Endothelial cell of umbilical vein (primary cell): ENCODE measurements at regions of chr19 and their contacts with region 1.

Region 1: GRCh38 chr19:46661020-46661731 is at the start of gene DACT3:
- DNase-seq: peak; percentile 100
- H3K4me3 ChIP-seq: peak within 1 kb of the TSS; percentile 29 to 57 (median 33)
- H3K27ac ChIP-seq: peak within 1 kb of the TSS; percentile 34
- H3K4me1 ChIP-seq: peaks cover 14% of the 10 kb centered on the region
- H3K27me3 ChIP-seq: peaks cover 13 to 22% of the 10 kb centered on the region in 2 experiments
- CTCF ChIP-seq: no peak
- POLR2A ChIP-seq: no peak
- total RNA-seq, gene DACT3: 0.22 and 0.65 TPM in 2 replicates

Region 2: DNA sequence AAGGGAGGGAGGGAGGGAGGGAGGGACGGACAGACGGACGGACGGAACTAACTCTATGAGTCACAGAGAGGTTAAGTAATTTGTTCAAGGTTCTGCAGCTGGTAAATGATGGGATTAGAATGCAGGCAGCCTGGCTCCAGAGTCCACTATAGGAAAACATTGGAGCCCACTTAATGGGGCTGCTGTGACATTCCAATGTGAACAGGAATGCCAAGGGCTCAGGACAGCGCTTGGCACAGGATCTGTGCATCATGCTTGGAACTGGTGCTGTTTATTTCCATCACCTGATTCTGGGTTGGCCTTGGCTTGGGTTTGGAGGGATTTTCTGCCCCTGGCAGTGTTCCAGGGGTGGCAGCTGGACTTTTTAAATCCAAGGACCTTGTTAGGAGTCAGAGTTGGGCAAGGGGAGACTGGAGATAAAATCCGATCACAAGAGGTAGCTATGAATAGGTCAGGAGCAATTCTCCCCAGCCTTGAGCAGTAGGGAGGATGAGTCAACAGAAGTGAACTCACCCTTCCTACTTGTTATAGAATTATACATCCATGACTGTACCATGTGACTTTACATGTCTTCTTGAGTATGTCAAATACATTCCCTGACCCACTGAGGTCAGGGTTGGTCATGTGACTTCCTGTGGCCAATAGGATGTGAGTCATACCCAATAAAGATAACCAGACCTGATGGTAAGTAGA is 372.1 kb before region 1 on chr19:
- CTCF ChIA-PET with region 1: no interaction called
- POLR2A ChIA-PET with region 1: no interaction called
- dilution Hi-C with region 1: no loop called
- intact Hi-C with region 1: no loop called
- DNase-seq: peak; percentile 95
- H3K4me3 ChIP-seq: no peak overlapping the region
- H3K27ac ChIP-seq: peak overlapping the region; percentile 95
- H3K4me1 ChIP-seq: peaks cover 16% of the 10 kb centered on the region
- H3K27me3 ChIP-seq: no peaks in the 10 kb centered on the region
- CTCF ChIP-seq: no peak
- POLR2A ChIP-seq: no peak

Region 3: GRCh38 chr19:46529622-46530462 is 131.3 kb before region 1 on chr19:
- CTCF ChIA-PET with region 1: interaction called, 65 read pairs
- POLR2A ChIA-PET with region 1: no interaction called
- dilution Hi-C with region 1: no loop called
- intact Hi-C with region 1: loop called (anchors 1 kb)
- DNase-seq: peak; percentile 55
- H3K4me3 ChIP-seq: no peak overlapping the region
- H3K27ac ChIP-seq: no peak overlapping the region
- H3K4me1 ChIP-seq: no peaks in the 10 kb centered on the region
- H3K27me3 ChIP-seq: peaks cover 0 to 1% of the 10 kb centered on the region in 2 experiments
- CTCF ChIP-seq: peak; percentile 86 to 94
- POLR2A ChIP-seq: no peak

Region 4: GRCh38 chr19:46564701-46565100 is 96.5 kb before region 1 on chr19:
- CTCF ChIA-PET with region 1: no interaction called
- POLR2A ChIA-PET with region 1: no interaction called
- dilution Hi-C with region 1: no loop called
- intact Hi-C with region 1: no loop called
- DNase-seq: no peak
- H3K4me3 ChIP-seq: no peak overlapping the region
- H3K27ac ChIP-seq: no peak overlapping the region
- H3K4me1 ChIP-seq: no peaks in the 10 kb centered on the region
- H3K27me3 ChIP-seq: peaks cover 0 to 3% of the 10 kb centered on the region in 2 experiments
- CTCF ChIP-seq: no peak
- POLR2A ChIP-seq: no peak

Region 5: GRCh38 chr19:46600384-46601317 is 60.5 kb before region 1 on chr19:
- CTCF ChIA-PET with region 1: interaction called, 22 read pairs
- POLR2A ChIA-PET with region 1: interaction called, 3 read pairs
- dilution Hi-C with region 1: no loop called
- intact Hi-C with region 1: loop called (anchors 1 kb)
- DNase-seq: peak; percentile 98
- H3K4me3 ChIP-seq: peak overlapping the region; percentile 2 to 99 (median 98)
- H3K27ac ChIP-seq: peak overlapping the region; percentile 93
- H3K4me1 ChIP-seq: peaks cover 13% of the 10 kb centered on the region
- H3K27me3 ChIP-seq: peaks cover 0 to 3% of the 10 kb centered on the region in 2 experiments
- CTCF ChIP-seq: no peak
- POLR2A ChIP-seq: peak; percentile 66

Region 6: DNA sequence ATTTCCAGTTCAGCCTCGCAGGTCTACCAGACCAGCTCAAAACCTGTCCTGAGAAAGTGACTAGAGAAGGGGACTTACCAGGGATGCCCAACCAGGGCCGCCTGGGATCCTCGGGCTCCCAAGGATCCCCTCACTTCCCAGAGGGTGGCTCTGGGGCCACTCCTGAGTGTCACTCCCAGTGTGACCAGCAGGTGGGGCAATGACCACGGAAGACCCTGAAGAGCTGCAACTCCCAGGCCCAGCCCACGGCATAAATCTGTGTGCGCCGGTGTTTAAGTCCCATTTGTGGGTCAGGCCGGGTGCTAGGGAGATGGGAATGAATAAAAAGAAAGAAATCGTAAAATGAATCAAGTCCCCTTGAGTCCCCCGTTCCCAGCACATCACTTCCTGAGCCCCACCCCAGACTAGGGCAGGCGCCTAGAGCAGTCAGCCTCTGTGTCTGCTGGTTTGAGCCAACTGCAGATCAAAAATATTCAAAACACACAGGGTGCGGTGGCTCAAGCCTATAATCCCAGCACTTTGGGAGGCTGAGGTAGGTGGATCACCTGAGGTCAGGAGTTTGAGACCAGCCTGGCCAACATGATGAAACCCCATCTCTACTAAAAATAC is 47.0 kb before region 1 on chr19:
- CTCF ChIA-PET with region 1: interaction called, 422 read pairs
- POLR2A ChIA-PET with region 1: interaction called, 4 read pairs
- dilution Hi-C with region 1: no loop called
- intact Hi-C with region 1: loop called (anchors 1 kb)
- DNase-seq: peak; percentile 73
- H3K4me3 ChIP-seq: no peak overlapping the region
- H3K27ac ChIP-seq: no peak overlapping the region
- H3K4me1 ChIP-seq: peaks cover 4% of the 10 kb centered on the region
- H3K27me3 ChIP-seq: no peaks in the 10 kb centered on the region
- CTCF ChIP-seq: peak; percentile 75 to 83
- POLR2A ChIP-seq: no peak

Region 7: DNA sequence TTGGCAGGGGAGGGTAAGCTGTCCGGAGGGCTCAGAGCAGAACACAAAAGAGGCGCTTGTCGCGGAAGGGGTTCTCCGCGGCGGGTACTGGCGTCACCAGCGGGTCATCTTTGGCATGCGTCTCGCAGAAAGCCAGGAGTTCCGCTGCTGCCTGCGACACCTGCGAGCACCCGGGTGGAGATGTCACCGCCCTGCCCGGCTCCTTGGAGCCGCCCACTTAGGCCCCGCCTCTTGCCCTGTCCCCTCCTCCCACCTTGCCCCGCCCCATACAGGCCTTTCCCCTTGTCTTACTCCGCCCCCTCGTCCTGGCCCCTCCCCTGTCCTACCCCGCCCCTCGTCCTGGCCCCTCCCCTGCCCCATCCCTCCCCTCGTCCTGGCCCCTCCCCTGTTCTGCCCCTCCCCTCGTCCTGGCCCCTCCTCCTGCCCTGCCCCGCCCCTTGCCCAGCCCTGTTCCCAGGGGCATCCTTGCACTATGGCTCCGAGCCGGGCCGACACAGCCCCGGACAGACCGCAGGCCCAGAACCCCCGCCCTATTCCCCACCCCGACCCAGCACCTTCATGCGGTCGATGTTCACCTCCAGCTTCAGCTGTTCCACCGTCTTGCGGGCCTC is 27.0 kb before region 1 on chr19:
- CTCF ChIA-PET with region 1: interaction called, 39 read pairs
- POLR2A ChIA-PET with region 1: interaction called, 3 read pairs
- dilution Hi-C with region 1: no loop called
- intact Hi-C with region 1: loop called (anchors 1 kb)
- DNase-seq: peak; percentile 75
- H3K4me3 ChIP-seq: peak overlapping the region in 1 of 3 experiments; percentile 32
- H3K27ac ChIP-seq: no peak overlapping the region
- H3K4me1 ChIP-seq: peaks cover 2% of the 10 kb centered on the region
- H3K27me3 ChIP-seq: peaks cover 0 to 12% of the 10 kb centered on the region in 2 experiments
- CTCF ChIP-seq: no peak
- POLR2A ChIP-seq: no peak

Region 8: GRCh38 chr19:46717034-46717723 is 56.0 kb after region 1 on chr19 and contains the start of gene PRKD2:
- CTCF ChIA-PET with region 1: interaction called, 3 read pairs
- POLR2A ChIA-PET with region 1: no interaction called
- dilution Hi-C with region 1: no loop called
- intact Hi-C with region 1: loop called (anchors 2 kb)
- DNase-seq: peak; percentile 84
- H3K4me3 ChIP-seq: peak within 1 kb of the TSS; percentile 76 to 96 (median 85)
- H3K27ac ChIP-seq: peak within 1 kb of the TSS; percentile 57
- H3K4me1 ChIP-seq: peaks cover 38% of the 10 kb centered on the region
- H3K27me3 ChIP-seq: no peaks in the 10 kb centered on the region
- CTCF ChIP-seq: no peak
- POLR2A ChIP-seq: peak; percentile 68
- total RNA-seq, gene PRKD2: 94.9 and 101 TPM in 2 replicates

Region 9: DNA sequence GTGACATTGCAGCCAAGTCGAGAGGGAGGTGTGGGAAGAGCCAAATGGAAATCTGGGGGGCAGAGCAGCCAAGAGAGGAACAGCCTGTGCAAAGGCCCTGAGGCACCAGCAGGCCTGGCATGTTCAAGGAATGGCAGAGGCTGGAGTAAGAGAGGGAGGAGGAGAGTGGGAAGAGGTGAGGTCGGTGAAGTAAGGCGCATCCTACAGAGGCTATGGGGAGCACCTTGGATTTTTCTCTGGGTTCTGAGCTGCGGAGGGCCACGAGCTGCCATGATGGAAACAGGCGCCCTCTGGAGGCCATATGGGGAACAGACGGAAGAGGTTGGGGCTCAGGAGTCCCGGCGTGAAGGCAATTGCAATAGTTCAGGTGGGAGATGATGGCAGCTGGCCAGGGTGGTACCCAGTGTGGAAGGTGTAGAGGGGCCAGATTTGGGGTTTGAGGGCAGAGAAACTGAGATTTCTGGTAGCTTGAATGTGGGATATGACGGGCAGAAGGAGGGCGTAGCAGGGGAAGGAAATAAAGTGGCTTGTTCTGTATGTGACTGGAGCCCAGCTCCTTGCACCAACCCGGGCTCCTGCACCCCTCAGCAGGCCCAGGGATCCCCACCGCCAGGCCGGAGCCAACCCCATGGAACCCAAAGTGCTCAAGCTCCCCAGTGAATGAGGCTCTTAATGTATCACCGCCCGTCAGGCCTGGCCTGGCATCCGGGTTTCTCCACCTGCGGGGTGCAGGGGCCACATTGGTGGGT is 105.6 kb after region 1 on chr19:
- CTCF ChIA-PET with region 1: no interaction called
- POLR2A ChIA-PET with region 1: no interaction called
- dilution Hi-C with region 1: no loop called
- intact Hi-C with region 1: no loop called
- DNase-seq: peak; percentile 27
- H3K4me3 ChIP-seq: no peak overlapping the region
- H3K27ac ChIP-seq: no peak overlapping the region
- H3K4me1 ChIP-seq: no peaks in the 10 kb centered on the region
- H3K27me3 ChIP-seq: no peaks in the 10 kb centered on the region
- CTCF ChIP-seq: peak; percentile 85
- POLR2A ChIP-seq: no peak

Region 10: DNA sequence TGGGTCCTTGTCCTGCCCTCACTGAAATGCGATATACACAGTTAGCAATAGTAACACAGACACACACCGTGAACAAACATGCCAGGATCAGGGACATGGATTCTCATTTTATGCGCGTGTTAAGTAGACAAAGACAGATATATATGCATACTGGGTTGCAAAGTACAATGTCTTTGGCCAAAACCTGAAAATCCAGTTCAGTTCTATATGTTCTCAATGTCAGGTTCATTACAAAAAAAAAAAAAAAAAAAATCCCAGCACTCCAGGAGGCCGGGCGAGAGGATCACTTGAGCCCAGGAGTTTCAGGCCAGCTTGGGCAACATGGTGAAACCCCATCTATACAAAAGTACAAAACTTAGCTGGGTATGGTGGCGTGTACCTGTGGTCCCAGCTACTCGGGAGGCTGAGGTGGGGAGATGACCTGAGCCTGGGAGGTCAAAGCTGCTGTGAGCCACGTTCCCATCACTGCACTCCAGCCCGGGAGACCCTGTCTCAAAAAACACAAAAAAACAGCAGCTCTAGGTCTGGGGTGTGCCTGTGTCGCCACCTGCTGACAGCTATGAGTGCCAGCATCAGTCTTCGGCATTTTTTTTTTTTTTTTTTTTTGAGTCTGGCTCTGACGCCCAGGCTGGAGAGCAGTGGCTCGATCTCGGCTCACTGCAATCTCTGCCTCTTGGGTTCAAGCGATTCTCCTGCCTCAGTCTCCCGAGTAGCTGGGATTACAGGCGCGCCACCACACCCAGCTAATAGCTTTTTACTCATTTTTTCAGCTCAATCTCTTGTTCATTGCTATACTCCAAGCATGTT is 179.2 kb after region 1 on chr19:
- CTCF ChIA-PET with region 1: interaction called, 10 read pairs
- POLR2A ChIA-PET with region 1: no interaction called
- dilution Hi-C with region 1: no loop called
- intact Hi-C with region 1: no loop called
- DNase-seq: peak; percentile 64
- H3K4me3 ChIP-seq: no peak overlapping the region
- H3K27ac ChIP-seq: no peak overlapping the region
- H3K4me1 ChIP-seq: no peaks in the 10 kb centered on the region
- H3K27me3 ChIP-seq: no peaks in the 10 kb centered on the region
- CTCF ChIP-seq: peak; percentile 65 to 83
- POLR2A ChIP-seq: no peak